SK-N-SH (cell line): ENCODE measurements at regions of chr2 and their contacts with region 1.

Region 1: GRCh38 chr2:102806250-102806837 is 44.5 kb downstream of the TMEM182 start:
- DNase-seq: peak; percentile 75
- H3K4me3 ChIP-seq: peak overlapping the region in 1 of 2 experiments; percentile 21; a peak in 1 of 4 replicates
- H3K27ac ChIP-seq: no peak overlapping the region
- H3K4me1 ChIP-seq: no peaks in the 10 kb centered on the region; a peak in 1 of 4 replicates
- H3K27me3 ChIP-seq: no peaks in the 10 kb centered on the region
- CTCF ChIP-seq: peak; percentile 80
- EP300 ChIP-seq: no peak
- RAD21 ChIP-seq: peak; percentile 78

Region 2: GRCh38 chr2:102753563-102754159 is 52.7 kb before region 1 on chr2:
- CTCF ChIA-PET with region 1: interaction called, 63 read pairs
- POLR2A ChIA-PET with region 1: no interaction called
- DNase-seq: peak; percentile 18
- H3K4me3 ChIP-seq: no peak overlapping the region; a peak in 1 of 4 replicates
- H3K27ac ChIP-seq: no peak overlapping the region
- H3K4me1 ChIP-seq: no peaks in the 10 kb centered on the region
- H3K27me3 ChIP-seq: no peaks in the 10 kb centered on the region
- CTCF ChIP-seq: peak; percentile 92
- EP300 ChIP-seq: no peak
- RAD21 ChIP-seq: peak; percentile 53

Region 3: DNA sequence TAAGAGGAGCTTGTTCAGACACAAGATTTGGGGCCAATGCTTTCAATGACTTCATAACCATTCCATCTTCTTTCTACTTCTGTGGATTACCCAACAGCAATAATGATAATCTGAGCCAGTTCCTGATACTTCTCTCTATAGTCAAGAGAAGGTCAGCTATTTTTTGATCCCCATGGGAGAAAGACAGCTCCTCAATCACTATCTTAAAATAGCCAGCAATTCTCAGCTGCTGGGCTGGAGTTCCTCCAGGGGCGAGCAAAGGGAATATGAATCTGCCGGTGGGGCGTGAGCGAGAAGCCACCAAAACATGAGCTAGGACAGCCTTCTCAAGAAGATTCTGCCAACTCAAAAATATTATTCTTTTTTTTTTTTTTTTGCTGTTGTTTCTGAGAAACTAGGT is 44.6 kb before region 1 on chr2 and contains the start of gene TMEM182:
- CTCF ChIA-PET with region 1: interaction called, 10 read pairs
- POLR2A ChIA-PET with region 1: no interaction called
- DNase-seq: no peak
- H3K4me3 ChIP-seq: no peak within 1 kb of the TSS
- H3K27ac ChIP-seq: no peak within 1 kb of the TSS
- H3K4me1 ChIP-seq: no peaks in the 10 kb centered on the region
- H3K27me3 ChIP-seq: no peaks in the 10 kb centered on the region
- CTCF ChIP-seq: no peak
- EP300 ChIP-seq: no peak
- RAD21 ChIP-seq: no peak
- polyA plus RNA-seq, gene TMEM182: 1.7 and 3.4 TPM in 2 replicates

Region 4: GRCh38 chr2:102782933-102783332 is 23.4 kb before region 1 on chr2:
- CTCF ChIA-PET with region 1: interaction called, 13 read pairs
- POLR2A ChIA-PET with region 1: no interaction called
- DNase-seq: no peak
- H3K4me3 ChIP-seq: no peak overlapping the region
- H3K27ac ChIP-seq: no peak overlapping the region
- H3K4me1 ChIP-seq: no peaks in the 10 kb centered on the region
- H3K27me3 ChIP-seq: no peaks in the 10 kb centered on the region
- CTCF ChIP-seq: no peak
- EP300 ChIP-seq: no peak
- RAD21 ChIP-seq: no peak

Region 5: GRCh38 chr2:102796337-102796736 is 10.0 kb before region 1 on chr2:
- CTCF ChIA-PET with region 1: interaction called, 16 read pairs
- POLR2A ChIA-PET with region 1: no interaction called
- DNase-seq: no peak
- H3K4me3 ChIP-seq: no peak overlapping the region
- H3K27ac ChIP-seq: no peak overlapping the region
- H3K4me1 ChIP-seq: no peaks in the 10 kb centered on the region
- H3K27me3 ChIP-seq: no peaks in the 10 kb centered on the region
- CTCF ChIP-seq: no peak
- EP300 ChIP-seq: no peak
- RAD21 ChIP-seq: no peak

Region 6: GRCh38 chr2:102826904-102827303 is 20.6 kb after region 1 on chr2:
- CTCF ChIA-PET with region 1: interaction called, 10 read pairs
- POLR2A ChIA-PET with region 1: no interaction called
- DNase-seq: peak; percentile 44
- H3K4me3 ChIP-seq: no peak overlapping the region
- H3K27ac ChIP-seq: no peak overlapping the region
- H3K4me1 ChIP-seq: peaks cover 0 to 5% of the 10 kb centered on the region in 2 experiments; a peak in 1 of 4 replicates
- H3K27me3 ChIP-seq: no peaks in the 10 kb centered on the region
- CTCF ChIP-seq: no peak
- EP300 ChIP-seq: no peak
- RAD21 ChIP-seq: no peak